GM12878 (cell line): ENCODE measurements at regions of chr5 and their contacts with region 1.

Region 1: DNA sequence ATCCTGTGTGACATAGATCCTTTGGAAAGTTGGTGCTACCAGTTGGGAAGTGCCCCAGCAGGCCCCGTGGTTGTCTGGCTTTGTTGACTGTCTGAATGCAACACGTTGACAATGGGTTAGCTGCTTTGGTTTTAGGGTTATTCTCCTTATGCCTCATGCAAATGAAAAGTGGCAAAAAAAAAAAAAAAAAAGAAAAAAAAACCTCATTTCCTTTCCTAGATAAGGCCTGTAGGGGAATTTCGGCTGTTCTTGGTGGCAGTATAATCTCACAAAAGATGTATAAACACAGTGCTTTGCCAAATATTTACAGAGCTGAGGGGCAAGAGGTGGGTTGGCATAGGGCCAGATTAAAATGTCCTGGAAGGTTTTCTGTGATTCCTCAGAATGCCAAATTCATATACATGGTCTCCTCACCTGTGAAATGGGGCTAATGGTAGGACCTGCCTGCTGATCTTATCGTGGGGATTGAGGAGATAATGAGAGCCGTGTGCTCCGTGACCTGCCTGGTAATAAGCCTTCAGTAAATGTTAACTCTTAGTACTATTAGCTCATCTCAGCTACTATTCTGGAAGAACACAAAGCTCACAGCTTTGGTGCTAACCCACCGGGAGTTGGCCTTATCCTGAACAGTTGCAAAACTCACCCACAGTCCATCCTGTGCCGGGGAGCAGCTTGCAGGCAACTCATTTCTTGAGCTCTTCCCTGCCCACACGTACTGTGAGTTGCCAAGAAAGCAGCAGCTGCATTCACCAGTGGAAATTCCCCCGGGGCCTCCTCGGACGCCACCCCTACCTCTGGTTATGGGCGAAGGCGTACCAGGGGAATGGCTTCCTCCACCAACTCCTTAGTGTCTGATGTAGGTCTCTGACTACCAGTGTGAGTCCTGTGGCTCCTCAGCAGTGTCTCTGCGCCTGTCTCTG is 220.3 kb downstream of the NR3C1 start:
- DNase-seq: peak; percentile 84
- ATAC-seq: peak; percentile 82
- H3K4me3 ChIP-seq: peak overlapping the region; percentile 32; the same call in 1 of the 2 replicates
- H3K27ac ChIP-seq: peak overlapping the region; percentile 90
- H3K4me1 ChIP-seq: peaks cover 53% of the 10 kb centered on the region
- H3K27me3 ChIP-seq: no peaks in the 10 kb centered on the region
- CTCF ChIP-seq: peak in 2 of 3 experiments; percentile 4 to 12; a peak in 1 of 6 replicates
- EP300 ChIP-seq: peak; percentile 78 to 79
- POLR2A ChIP-seq: peak; percentile 46
- RAD21 ChIP-seq: 0 out of 2 replicates have a peak, but pooled peaks have one; percentile 32

Region 2: DNA sequence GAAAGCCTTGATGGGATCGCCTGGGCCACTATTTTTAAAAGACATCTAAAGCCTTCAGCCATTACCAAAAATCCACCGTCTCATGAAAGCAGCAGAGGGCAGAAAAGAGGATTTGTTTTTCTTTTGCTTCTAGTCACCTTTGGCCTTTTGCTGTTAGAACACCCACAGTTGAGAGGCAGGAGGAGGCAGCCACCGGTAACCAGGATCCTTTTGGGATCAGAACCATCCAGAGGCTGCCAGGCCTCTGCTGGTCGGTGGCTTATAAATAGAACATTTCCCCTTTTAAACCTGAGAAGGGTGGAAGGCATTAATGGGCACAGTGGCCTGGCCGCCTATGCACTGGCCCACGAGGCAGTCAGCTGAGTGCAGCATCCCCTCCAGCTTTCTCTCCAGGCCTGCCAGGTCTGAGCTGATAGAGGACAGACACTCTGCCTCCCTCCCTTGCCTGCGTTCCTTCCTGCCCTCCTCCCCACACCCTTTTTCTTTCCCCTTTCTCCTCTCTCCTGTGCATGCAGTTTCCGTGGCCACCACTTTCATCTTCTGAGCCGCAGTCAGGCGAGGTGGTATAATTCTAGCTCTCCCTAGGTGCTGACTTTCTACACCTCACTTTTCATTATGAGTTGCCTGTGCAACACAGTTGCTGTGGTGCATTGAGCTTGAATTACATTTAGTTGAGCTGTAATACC is 159.6 kb before region 1 on chr5:
- CTCF ChIA-PET with region 1: interaction called, 3 read pairs
- POLR2A ChIA-PET with region 1: interaction called, 10 read pairs
- RAD21 ChIA-PET with region 1: interaction called, 35 read pairs
- SMC1A ChIA-PET with region 1: interaction called, 17 read pairs
- in situ Hi-C with region 1: no loop called
- intact Hi-C with region 1: no loop called
- DNase-seq: peak; percentile 87
- ATAC-seq: peak; percentile 65
- H3K4me3 ChIP-seq: 0 out of 2 replicates have a peak overlapping the region, but pooled peaks have one; percentile 21
- H3K27ac ChIP-seq: peak overlapping the region; percentile 95
- H3K4me1 ChIP-seq: peaks cover 77% of the 10 kb centered on the region
- H3K27me3 ChIP-seq: no peaks in the 10 kb centered on the region
- CTCF ChIP-seq: no peak; a peak in 1 of 6 replicates
- EP300 ChIP-seq: peak; percentile 52 to 66; a peak in 2 of 4 replicates
- POLR2A ChIP-seq: peak; percentile 60
- RAD21 ChIP-seq: peak; percentile 36

Region 3: DNA sequence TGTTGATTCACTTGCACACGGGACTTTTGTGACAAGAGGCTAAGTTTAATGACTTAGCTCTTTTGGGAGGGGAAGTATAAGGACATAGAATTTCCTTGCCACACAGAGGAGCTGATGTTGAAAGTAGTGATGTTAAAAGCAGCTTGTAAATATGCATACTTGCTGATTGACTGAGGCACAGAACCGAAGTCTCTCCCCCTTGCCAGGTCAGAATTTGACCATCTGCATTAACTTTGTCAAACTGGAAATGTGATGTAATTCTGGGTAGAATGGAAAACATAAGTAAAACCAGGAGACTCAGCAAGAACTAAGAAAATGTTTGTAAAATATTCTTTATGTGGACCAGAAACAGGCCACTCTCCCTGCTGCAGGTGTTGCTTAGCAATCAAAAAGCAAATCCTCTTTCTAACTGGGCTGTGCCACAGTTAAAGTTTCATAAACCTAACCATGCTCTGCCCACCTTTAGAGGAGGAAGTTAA is 63.8 kb before region 1 on chr5:
- CTCF ChIA-PET with region 1: interaction called, 4 read pairs
- POLR2A ChIA-PET with region 1: interaction called, 7 read pairs
- RAD21 ChIA-PET with region 1: interaction called, 15 read pairs
- SMC1A ChIA-PET with region 1: interaction called, 37 read pairs
- in situ Hi-C with region 1: no loop called
- intact Hi-C with region 1: no loop called
- DNase-seq: no peak
- ATAC-seq: peak; percentile 82
- H3K4me3 ChIP-seq: no peak overlapping the region
- H3K27ac ChIP-seq: peak overlapping the region; percentile 35
- H3K4me1 ChIP-seq: peaks cover 23% of the 10 kb centered on the region
- H3K27me3 ChIP-seq: no peaks in the 10 kb centered on the region
- CTCF ChIP-seq: no peak
- EP300 ChIP-seq: no peak
- POLR2A ChIP-seq: no peak
- RAD21 ChIP-seq: no peak

Region 4: DNA sequence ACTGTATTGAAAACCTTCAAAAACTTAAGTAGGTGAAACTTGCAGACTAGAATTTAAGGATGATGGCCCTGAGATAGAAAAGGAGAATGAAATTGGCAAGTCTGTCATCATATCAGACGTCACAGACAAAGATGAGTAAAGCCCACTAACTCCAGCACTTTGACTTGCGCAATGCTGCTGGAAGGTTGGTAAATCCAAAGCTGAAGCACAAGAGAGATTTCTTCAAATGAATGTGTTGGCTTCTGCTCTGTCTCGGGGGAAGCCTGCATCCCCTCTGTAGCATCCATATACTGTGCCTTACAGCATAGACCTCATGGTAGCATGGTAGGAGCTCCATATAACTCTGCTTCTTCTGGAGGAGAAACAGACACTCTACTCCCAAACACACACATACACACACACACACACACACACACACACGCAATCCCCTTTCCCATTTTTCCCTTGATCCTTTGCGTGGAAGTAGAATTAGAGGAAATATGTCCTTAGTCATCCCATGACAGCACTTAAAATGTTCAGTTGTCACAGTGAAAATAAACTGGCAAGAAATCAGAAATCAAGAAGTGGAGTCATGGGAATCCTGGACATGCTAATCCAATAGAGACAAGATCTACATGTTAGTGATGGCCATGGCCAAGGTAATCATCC is 21.1 kb before region 1 on chr5:
- CTCF ChIA-PET with region 1: interaction called, 5 read pairs
- POLR2A ChIA-PET with region 1: interaction called, 3 read pairs
- RAD21 ChIA-PET with region 1: interaction called, 44 read pairs
- SMC1A ChIA-PET with region 1: interaction called, 50 read pairs
- in situ Hi-C with region 1: no loop called
- intact Hi-C with region 1: no loop called
- DNase-seq: no peak
- ATAC-seq: no peak
- H3K4me3 ChIP-seq: no peak overlapping the region
- H3K27ac ChIP-seq: no peak overlapping the region
- H3K4me1 ChIP-seq: no peaks in the 10 kb centered on the region; the same call in 1 of the 2 replicates
- H3K27me3 ChIP-seq: no peaks in the 10 kb centered on the region
- CTCF ChIP-seq: no peak
- EP300 ChIP-seq: no peak
- POLR2A ChIP-seq: no peak
- RAD21 ChIP-seq: no peak

Region 5: GRCh38 chr5:143200781-143201398 is 17.7 kb after region 1 on chr5:
- CTCF ChIA-PET with region 1: interaction called, 82 read pairs
- POLR2A ChIA-PET with region 1: interaction called, 23 read pairs
- RAD21 ChIA-PET with region 1: interaction called, 227 read pairs
- SMC1A ChIA-PET with region 1: interaction called, 193 read pairs
- in situ Hi-C with region 1: no loop called
- intact Hi-C with region 1: loop called (anchors 1 kb)
- DNase-seq: no peak
- ATAC-seq: peak; percentile 69
- H3K4me3 ChIP-seq: no peak overlapping the region
- H3K27ac ChIP-seq: peak overlapping the region; percentile 14; the same call in 1 of the 2 replicates
- H3K4me1 ChIP-seq: peaks cover 17% of the 10 kb centered on the region
- H3K27me3 ChIP-seq: no peaks in the 10 kb centered on the region
- CTCF ChIP-seq: no peak
- EP300 ChIP-seq: no peak
- POLR2A ChIP-seq: no peak
- RAD21 ChIP-seq: no peak

Region 6: DNA sequence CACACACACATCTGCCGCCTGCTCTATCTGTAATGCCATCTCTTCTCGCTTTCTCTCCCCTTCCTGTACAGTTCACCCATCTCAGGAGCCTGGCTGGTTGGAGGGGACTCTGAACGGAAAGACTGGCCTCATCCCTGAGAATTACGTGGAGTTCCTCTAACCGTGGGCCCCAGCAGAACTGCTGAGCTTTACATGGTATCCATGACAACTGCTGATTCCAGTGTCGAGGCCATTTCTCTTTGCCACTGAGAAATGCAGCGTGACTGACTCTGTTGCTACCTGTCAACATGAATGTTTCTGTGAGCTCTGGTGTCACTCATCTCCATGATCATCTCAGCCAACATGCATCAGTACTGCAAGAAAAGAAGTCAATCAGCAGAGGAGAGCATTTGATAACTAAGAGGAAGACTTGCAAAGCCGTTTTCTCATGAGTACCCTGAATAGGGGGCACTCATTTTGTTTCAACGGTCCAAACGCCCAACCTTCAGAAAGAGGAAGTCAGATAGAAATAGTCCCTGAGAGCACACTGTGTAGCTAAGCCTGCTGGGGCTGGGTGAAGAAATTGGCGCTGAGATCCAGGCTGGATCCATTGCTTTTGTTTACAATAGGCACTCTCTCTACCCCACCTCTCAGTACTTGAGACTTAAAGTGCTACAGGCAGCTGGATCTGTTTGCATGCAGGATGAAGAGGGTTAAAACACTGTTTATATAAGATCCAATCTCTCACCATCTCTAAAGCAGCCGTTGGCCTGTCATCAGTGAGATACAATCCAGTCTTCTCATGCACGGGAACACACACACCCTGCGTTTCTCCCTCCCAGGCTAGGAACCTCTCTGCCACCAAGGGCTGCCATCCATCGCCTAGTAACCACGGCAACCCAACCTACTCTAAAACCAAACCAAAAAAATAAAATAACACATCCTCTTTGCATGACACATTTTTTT is 39.4 kb after region 1 on chr5:
- CTCF ChIA-PET with region 1: interaction called, 3 read pairs
- POLR2A ChIA-PET with region 1: interaction called, 7 read pairs
- RAD21 ChIA-PET with region 1: interaction called, 22 read pairs
- SMC1A ChIA-PET with region 1: interaction called, 84 read pairs
- in situ Hi-C with region 1: no loop called
- intact Hi-C with region 1: no loop called
- DNase-seq: peak; percentile 82
- ATAC-seq: peak; percentile 70
- H3K4me3 ChIP-seq: no peak overlapping the region
- H3K27ac ChIP-seq: peak overlapping the region; percentile 100
- H3K4me1 ChIP-seq: peaks cover 60% of the 10 kb centered on the region
- H3K27me3 ChIP-seq: no peaks in the 10 kb centered on the region
- CTCF ChIP-seq: no peak
- EP300 ChIP-seq: 0 out of 4 replicates have a peak, but pooled peaks of 1 of the 2 experiments have one; percentile 50
- POLR2A ChIP-seq: peak; percentile 50; the same call in 1 of the 2 replicates
- RAD21 ChIP-seq: no peak; the same call in 1 of the 2 replicates